ENCODE measurements at regions of chr12 and their contacts with region 1.

Region 1: GRCh38 chr12:89709157-89709994 is 738 bp upstream of the ATP2B1 start:
- DNase-seq: peak; percentile 97
- H3K4me3 Mint-ChIP-seq: peak overlapping the region; percentile 94
- H3K27ac Mint-ChIP-seq: peak overlapping the region; percentile 95
- H3K4me1 Mint-ChIP-seq: peaks cover 22% of the 10 kb centered on the region
- H3K27me3 Mint-ChIP-seq: no peaks in the 10 kb centered on the region
- CTCF ChIP-seq: no peak

Region 2: DNA sequence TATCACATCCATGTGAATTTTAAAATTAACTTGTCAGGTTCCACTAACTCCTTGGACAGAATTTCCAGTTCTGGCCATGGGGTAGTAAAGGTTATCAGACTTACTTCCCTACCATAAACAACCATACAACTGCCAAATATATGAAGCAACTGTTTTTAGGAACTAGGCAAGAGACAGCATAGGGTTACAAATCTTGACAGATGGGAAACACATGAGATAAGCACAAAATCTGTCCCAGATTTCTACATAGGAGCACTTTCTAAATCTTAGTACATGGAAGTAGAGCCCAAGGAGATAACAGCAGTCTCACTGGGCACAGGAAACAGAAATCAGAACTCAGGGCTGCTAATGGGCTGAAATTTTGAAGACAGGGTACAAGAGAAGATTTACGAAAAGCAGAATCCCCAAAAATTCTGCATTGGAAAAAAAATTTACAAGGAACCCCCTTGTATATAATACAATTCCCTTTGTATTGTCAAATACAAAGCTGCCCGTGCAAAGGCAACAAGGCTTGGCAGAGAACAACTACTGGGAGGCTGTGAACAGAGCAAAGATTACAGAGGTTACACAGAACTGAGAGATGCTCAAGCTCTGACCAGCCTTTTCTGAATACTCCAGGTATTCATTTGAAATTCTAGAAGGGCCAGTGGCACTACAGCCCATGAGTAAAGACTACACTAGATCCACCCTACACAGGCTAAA is 228.0 kb before region 1 on chr12:
- CTCF ChIA-PET with region 1: no interaction called
- POLR2A ChIA-PET with region 1: no interaction called
- intact Hi-C with region 1: no loop called
- DNase-seq: no peak
- H3K4me3 Mint-ChIP-seq: no peak overlapping the region
- H3K27ac Mint-ChIP-seq: no peak overlapping the region
- H3K4me1 Mint-ChIP-seq: no peaks in the 10 kb centered on the region
- H3K27me3 Mint-ChIP-seq: no peaks in the 10 kb centered on the region
- CTCF ChIP-seq: no peak

Region 3: GRCh38 chr12:89695100-89695499 is 14.3 kb before region 1 on chr12:
- CTCF ChIA-PET with region 1: interaction called, 4 read pairs
- POLR2A ChIA-PET with region 1: interaction called, 136 read pairs
- intact Hi-C with region 1: no loop called
- DNase-seq: peak; percentile 42
- H3K4me3 Mint-ChIP-seq: no peak overlapping the region
- H3K27ac Mint-ChIP-seq: no peak overlapping the region
- H3K4me1 Mint-ChIP-seq: peaks cover 40% of the 10 kb centered on the region
- H3K27me3 Mint-ChIP-seq: no peaks in the 10 kb centered on the region
- CTCF ChIP-seq: no peak

Region 4: GRCh38 chr12:89768586-89769486 is 59.5 kb after region 1 on chr12:
- CTCF ChIA-PET with region 1: interaction called, 3 read pairs
- POLR2A ChIA-PET with region 1: interaction called, 21 read pairs
- intact Hi-C with region 1: no loop called
- DNase-seq: peak; percentile 97
- H3K4me3 Mint-ChIP-seq: no peak overlapping the region
- H3K27ac Mint-ChIP-seq: peak overlapping the region; percentile 84
- H3K4me1 Mint-ChIP-seq: peaks cover 21% of the 10 kb centered on the region
- H3K27me3 Mint-ChIP-seq: no peaks in the 10 kb centered on the region
- CTCF ChIP-seq: no peak

Region 5: DNA sequence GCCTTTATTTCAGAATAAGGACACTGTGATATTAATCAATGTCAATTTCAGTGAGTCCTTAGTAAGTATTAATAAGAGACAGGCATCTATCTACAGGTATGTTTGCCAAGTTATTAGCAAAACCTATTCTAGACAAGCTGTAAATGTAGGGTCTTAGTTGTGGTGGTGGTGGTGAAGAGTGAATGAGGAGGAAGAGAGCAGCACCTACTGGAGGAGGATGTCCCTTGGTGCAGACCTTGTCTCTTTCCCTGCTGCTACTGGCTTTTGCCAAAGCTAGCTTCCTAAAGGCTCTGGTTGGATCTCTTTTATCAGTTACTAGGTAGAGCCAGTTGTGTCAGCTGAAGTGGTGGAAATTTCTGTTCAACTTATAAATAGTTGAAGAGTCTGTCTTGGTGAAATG is 304.0 kb after region 1 on chr12:
- CTCF ChIA-PET with region 1: no interaction called
- POLR2A ChIA-PET with region 1: interaction called, 3 read pairs
- intact Hi-C with region 1: loop called (anchors 5 kb)
- DNase-seq: no peak
- H3K4me3 Mint-ChIP-seq: no peak overlapping the region
- H3K27ac Mint-ChIP-seq: no peak overlapping the region
- H3K4me1 Mint-ChIP-seq: peaks cover 9% of the 10 kb centered on the region
- H3K27me3 Mint-ChIP-seq: no peaks in the 10 kb centered on the region
- CTCF ChIP-seq: no peak

Region 6: DNA sequence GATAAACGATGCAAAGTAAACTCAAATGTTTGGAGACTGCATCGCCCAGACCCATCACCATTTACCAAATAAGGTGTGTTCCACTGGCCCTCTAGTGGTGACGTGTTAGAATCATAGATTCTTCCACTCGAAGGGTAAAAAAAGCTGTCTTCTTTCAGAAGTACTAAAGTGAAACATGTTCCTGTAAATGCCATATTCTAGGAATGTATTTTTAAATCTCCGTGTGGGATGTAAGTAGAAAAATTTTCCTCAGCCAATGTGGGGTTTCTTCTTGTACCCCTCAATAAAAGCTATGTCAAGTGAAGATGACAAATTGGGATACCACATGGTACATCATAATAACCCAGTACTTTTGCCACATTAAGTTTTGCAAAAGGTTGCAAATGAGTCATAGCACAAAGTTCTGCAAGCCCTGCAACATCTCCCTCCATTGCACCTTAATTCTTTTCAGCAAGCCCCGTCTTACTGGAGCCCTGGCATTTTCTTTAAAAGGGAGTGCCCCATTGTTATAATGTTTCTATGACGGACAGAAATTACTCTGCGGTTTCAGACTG is 1144.8 kb after region 1 on chr12:
- CTCF ChIA-PET with region 1: interaction called, 4 read pairs
- POLR2A ChIA-PET with region 1: no interaction called
- intact Hi-C with region 1: loop called (anchors 5 kb)
- DNase-seq: peak; percentile 64
- H3K4me3 Mint-ChIP-seq: no peak overlapping the region
- H3K27ac Mint-ChIP-seq: no peak overlapping the region
- H3K4me1 Mint-ChIP-seq: no peaks in the 10 kb centered on the region
- H3K27me3 Mint-ChIP-seq: no peaks in the 10 kb centered on the region
- CTCF ChIP-seq: peak; percentile 61

Measured in MCF 10A (cell line).